ENCODE measurements at regions of chr5 and their contacts with region 1.

Region 1: DNA sequence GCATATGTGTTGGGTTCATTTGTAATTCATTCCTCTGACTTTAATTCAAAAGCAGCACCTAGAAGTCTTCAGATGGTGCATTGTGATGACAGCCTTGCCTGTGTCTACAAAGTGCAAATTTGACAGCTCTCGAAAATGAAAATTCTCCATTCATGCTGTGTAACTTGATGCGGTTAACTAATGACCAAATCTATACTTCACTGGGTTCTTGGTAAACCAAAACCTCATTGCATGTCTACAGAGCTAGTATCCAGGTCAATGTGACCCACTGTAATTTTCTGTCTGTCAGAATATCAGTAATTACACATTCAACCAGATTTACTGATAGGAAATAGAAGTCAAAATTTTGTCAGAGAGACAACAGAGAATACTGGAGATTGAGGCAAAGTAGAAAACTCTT is 66.3 kb downstream of the YIPF5 start:
- DNase-seq: no peak
- H3K4me3 Mint-ChIP-seq: no peak overlapping the region
- H3K27ac Mint-ChIP-seq: no peak overlapping the region
- H3K4me1 Mint-ChIP-seq: no peaks in the 10 kb centered on the region
- H3K27me3 Mint-ChIP-seq: no peaks in the 10 kb centered on the region
- CTCF ChIP-seq: no peak

Region 2: DNA sequence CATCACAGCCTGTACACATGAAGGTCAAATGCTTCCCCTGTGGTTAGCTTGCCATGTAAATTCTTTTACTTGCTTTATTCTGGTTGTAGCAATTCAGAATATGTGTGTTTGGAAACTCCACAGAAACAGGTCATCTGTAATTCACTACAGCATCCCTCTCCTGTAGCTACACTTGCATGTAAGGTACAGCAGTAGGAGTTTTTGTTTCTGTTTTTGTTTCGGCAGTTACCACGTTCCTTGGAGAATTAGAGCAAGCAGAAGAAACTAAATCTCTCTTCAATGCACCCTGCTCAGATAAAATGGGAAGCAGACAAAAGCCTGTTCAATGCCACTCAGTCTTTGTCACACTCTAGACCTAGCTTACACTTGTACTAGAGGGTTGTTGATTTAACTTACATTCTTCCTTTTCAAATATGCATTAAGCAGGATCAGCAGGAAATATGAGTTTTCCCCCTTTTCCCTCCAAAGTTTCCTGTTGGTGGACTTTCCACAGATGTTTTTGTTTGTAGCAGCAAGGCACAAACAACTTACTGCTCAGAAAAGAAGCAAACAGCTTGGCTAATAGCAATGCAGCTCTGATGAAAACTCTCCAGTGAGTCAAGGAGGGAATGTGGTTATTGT is 14.6 kb before region 1 on chr5:
- CTCF ChIA-PET with region 1: interaction called, 10 read pairs
- POLR2A ChIA-PET with region 1: no interaction called
- intact Hi-C with region 1: no loop called
- DNase-seq: no peak
- H3K4me3 Mint-ChIP-seq: no peak overlapping the region
- H3K27ac Mint-ChIP-seq: no peak overlapping the region
- H3K4me1 Mint-ChIP-seq: peaks cover 5% of the 10 kb centered on the region
- H3K27me3 Mint-ChIP-seq: no peaks in the 10 kb centered on the region
- CTCF ChIP-seq: no peak

Region 3: DNA sequence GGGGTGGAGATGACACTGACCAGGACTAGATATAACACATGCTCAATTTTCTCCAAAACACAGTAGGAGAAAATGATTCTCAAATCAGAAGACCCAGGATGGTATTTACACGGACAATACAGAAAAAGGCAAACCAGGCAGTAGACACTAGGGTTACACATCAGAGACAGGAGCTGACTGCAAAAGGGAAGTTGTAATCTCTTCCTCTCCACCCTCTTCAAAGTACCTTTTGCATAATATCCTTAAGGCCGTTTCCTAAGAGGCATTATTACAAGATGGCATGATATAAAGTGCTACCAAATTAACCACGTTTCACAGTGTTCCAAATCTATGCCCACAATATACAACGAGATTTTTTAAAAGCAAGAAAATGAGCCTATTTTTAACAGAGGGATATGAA is 27.2 kb after region 1 on chr5:
- CTCF ChIA-PET with region 1: no interaction called
- POLR2A ChIA-PET with region 1: no interaction called
- intact Hi-C with region 1: no loop called
- DNase-seq: no peak
- H3K4me3 Mint-ChIP-seq: no peak overlapping the region
- H3K27ac Mint-ChIP-seq: no peak overlapping the region
- H3K4me1 Mint-ChIP-seq: no peaks in the 10 kb centered on the region
- H3K27me3 Mint-ChIP-seq: no peaks in the 10 kb centered on the region
- CTCF ChIP-seq: no peak

Region 4: DNA sequence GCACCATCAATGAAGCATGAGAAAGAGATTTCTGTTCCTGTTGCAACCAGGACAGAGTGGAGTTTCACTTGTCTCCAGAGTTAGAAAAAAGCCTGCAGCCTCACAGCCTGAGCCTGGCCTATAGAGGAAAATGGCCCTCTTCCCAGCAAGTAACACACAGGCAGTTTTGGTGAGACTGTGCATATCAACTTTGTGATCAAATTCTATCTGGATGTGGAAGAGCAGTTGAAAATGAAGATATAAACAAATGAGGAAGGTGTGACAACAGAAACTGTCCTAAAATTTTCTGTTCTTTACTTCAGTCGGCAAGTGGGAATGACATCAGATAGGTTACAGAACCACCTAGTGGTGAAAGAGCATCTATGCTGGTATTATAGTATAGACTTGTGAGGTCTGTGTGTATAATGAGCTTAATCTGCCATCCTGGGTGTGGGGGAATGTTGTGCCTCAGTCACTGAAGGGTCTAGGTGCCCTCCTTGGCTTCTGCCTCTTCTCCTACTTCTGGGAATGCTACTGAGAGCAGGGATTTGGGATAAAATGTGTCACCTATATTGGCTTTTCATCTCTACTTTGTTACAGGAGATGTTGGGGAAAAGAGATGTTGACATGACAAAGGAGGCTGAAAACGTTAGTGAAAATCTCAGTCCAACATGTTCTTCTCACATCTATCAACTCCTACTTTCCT is 38.2 kb after region 1 on chr5:
- CTCF ChIA-PET with region 1: no interaction called
- POLR2A ChIA-PET with region 1: no interaction called
- intact Hi-C with region 1: no loop called
- DNase-seq: peak; percentile 70
- H3K4me3 Mint-ChIP-seq: no peak overlapping the region
- H3K27ac Mint-ChIP-seq: no peak overlapping the region
- H3K4me1 Mint-ChIP-seq: peaks cover 15% of the 10 kb centered on the region
- H3K27me3 Mint-ChIP-seq: no peaks in the 10 kb centered on the region
- CTCF ChIP-seq: peak; percentile 89

Measured in MCF 10A (cell line).